Common myeloid progenitor, CD34-positive (primary cell): ENCODE measurements at regions of chr3 and their contacts with region 1.

Region 1: DNA sequence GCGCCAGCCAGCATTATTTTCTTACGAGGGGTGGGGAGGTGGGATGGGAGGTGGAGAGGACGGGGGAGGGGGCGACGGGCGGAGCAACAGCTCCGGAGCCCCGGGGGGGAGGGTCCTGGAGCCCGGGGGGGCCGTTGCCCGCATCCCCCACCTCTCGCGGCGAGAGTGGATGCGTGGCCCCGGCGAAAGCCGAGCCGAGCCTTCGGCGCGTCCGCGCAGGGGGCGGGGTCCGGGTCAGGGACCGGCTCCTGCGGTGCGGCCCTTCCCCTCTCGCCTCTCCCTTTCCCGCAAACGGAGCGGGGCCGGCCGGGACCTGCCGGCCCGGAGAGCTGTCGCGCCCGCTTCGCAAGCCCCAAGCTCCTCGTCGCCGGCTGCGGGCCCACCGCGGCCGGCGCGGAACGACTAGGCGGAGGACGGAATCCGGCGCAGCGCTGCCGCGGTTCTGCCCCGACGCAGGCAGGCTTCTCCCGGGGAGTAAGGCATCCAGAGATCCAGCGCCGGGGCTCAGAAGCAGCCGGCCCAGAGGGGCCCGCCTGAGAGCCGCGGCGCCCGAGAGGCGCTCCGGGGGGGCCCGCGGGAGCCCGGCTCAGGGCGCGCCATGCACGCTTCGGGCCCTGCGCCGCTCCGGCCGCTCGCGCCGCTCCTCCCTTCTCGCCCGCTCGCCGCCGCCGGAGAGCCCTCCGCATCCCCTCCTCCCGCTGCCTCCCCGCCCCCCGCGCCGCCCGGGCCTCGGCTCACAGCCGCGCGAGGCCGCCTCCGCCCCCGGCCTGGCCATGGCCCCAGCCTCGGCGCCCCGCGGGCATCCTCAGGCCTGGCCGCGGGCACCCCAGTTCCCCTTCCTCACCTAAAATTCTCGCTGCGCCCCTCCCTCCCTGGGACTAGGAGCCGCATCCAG is 459 bp upstream of the ADCY5 start:
- DNase-seq: peak in 2 of 3 donors; percentile 26 to 36
- H3K4me3 ChIP-seq: peak overlapping the region; percentile 37 to 74 (median 61)
- H3K27ac ChIP-seq: no peak overlapping the region
- H3K4me1 ChIP-seq: peaks cover 0 to 21% (median 17%) of the 10 kb centered on the region in 4 experiments
- H3K27me3 ChIP-seq: peaks cover 18 to 79% (median 33%) of the 10 kb centered on the region in 5 experiments

Region 2: DNA sequence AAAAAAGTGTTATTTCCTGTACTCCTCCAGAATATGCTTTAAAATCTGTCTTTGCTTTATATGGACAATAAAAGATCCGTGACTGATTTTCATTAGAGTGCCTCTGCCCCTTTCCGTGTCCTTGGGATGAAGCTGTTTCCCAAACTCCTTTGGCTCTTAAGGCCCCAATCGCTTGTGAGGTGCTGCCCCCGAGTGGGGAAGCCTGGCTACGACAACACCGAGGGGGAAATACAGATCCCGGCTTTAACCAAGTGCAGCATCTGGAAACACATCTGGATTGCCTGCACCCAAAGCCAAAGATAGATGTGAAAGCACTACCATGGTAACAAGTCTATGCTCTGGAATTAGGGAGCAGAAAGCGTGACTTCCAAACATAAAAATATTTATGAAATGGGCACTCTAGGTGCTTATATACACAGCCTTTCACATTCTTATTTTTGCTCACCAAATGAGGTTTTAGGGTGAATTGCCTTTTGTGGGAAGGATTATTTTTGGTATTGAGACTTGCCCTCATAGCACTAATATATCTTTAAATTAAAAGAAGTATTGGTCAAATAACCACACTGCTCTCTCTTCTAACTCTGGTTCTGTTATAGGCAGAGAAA is 40.2 kb after region 1 on chr3:
- CTCF ChIA-PET with region 1: interaction called, 16 read pairs
- POLR2A ChIA-PET with region 1: no interaction called
- DNase-seq: peak; percentile 38 to 63 (median 52)
- H3K4me3 ChIP-seq: no peak overlapping the region
- H3K27ac ChIP-seq: no peak overlapping the region
- H3K4me1 ChIP-seq: no peaks in the 10 kb centered on the region
- H3K27me3 ChIP-seq: peaks cover 0 to 4% (median 2%) of the 10 kb centered on the region in 5 experiments